ENCODE measurements at regions of chr9 and their contacts with region 1.

Region 1: DNA sequence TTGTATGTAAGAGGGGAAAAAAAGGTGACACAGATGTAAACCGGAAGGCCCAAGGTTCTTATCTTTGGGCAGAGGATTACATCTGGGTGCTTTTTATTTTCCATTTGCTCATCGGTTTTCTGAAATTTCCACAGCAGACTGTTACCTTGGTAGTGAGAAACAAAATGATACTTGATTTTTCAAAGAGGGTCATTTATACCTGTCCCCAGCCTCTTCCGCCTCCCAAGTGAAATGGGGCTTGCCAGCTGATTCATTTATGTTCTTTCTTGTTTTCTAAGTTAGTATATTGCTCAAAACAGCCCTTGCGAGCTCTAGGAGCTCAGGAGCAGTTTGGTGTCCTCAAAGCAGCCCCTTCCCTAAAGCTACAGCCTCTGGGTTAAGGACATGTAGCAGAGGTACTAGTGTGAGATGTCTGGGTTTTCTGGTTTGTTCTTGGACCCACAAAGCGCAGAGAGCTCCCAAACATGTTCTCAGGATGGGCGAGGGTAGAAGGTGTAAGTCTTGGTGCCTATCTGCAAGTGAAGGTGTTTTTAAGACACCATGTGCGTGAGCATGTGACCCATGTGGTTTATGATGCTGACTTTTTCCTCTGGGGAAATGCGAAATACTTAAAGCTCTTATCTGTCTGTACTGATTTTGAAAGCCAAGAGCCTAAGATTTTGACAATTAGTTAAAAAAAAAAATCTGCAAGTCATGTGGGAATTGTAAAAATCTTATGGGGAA is 38.3 kb downstream of the DAPK1 start:
- DNase-seq: peak; percentile 31
- H3K4me3 Mint-ChIP-seq: peak overlapping the region; percentile 16
- H3K27ac Mint-ChIP-seq: peak overlapping the region; percentile 97
- H3K4me1 Mint-ChIP-seq: peaks cover 23% of the 10 kb centered on the region
- H3K27me3 Mint-ChIP-seq: no peaks in the 10 kb centered on the region

Region 2: DNA sequence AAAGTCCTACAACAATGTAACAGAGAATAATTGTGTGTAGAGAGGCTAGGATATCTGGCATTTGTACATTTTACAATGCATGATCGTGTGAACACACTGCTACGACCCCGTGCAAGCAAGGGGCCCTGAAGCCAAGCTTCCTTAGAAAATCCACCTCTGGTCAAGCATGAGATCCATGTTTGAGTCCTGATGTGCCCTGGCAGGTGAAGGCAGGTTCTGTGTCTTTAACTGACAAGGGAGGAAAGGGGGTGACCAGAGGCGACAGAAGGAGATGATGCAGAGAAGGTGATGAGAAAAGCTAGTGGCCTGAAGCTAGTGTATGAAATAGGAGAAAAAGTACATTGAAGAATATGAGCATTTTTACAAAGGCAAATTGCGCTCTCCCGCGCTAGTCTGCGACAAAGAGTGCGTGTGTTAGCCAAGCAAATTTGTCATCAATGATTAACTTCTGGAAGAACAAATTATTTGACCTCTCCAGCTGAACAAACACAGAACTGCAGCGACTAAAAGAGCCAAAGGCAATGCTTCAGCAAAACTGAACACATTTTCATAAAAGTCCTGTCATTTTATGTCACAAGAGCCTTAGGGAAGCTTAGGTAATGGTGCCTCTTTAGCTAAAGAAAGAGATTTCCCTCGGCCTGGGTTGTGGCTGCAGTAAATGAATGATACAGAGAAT is 140.0 kb before region 1 on chr9:
- intact Hi-C with region 1: no loop called
- DNase-seq: no peak
- H3K4me3 Mint-ChIP-seq: no peak overlapping the region
- H3K27ac Mint-ChIP-seq: no peak overlapping the region
- H3K4me1 Mint-ChIP-seq: no peaks in the 10 kb centered on the region
- H3K27me3 Mint-ChIP-seq: peaks cover 7% of the 10 kb centered on the region

Region 3: DNA sequence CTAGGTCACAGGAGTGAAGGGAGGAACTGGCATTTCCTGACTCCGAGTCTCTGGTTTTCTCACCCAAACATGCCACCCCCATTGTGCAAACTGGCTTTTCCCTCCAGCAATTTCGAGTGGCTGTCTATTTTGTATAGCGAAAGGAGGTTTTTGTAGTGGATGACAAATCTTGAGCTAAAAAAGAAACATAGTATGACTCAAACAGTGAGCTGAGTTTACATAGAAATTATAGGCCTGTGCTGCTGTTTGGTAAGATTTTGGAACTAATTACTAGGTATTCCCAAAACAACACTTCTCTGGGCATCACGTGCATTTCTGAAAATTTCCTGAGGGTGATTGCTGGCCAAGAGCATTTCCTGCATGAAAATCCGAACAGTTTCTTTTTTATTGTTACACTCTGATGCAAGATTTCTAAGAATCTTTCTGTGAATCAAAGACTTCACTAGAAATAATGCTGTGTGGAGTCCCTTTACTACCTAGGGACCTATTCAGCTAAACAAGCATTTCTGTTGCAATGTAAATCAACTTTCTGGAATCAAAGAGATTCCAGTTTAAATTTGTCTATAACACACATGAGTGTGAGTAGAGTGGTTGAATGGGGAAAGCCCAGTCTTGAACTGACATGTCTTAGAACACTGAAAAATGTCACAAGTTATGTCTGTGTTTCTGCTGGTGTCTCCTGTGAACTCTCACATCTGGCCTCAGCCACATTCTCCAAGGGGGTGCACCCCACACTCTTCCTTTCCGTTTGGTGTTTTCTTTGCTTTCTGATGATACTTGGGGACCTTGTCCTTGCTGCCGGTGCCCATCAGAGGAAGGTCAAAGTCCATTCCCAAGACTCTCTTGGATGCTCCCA is 71.6 kb before region 1 on chr9:
- intact Hi-C with region 1: loop called (anchors 1 kb)
- DNase-seq: no peak
- H3K4me3 Mint-ChIP-seq: peak overlapping the region; percentile 39
- H3K27ac Mint-ChIP-seq: peak overlapping the region; percentile 92
- H3K4me1 Mint-ChIP-seq: peaks cover 18% of the 10 kb centered on the region
- H3K27me3 Mint-ChIP-seq: no peaks in the 10 kb centered on the region

Region 4: GRCh38 chr9:87792831-87793288 is 256.9 kb after region 1 on chr9:
- intact Hi-C with region 1: loop called (anchors 5 kb)
- DNase-seq: peak; percentile 44
- H3K4me3 Mint-ChIP-seq: no peak overlapping the region
- H3K27ac Mint-ChIP-seq: peak overlapping the region; percentile 89
- H3K4me1 Mint-ChIP-seq: peaks cover 55% of the 10 kb centered on the region
- H3K27me3 Mint-ChIP-seq: no peaks in the 10 kb centered on the region